Kidney (tissue), 22 donors: ENCODE measurements at regions of chr4 and their contacts with region 1.

Region 1: DNA sequence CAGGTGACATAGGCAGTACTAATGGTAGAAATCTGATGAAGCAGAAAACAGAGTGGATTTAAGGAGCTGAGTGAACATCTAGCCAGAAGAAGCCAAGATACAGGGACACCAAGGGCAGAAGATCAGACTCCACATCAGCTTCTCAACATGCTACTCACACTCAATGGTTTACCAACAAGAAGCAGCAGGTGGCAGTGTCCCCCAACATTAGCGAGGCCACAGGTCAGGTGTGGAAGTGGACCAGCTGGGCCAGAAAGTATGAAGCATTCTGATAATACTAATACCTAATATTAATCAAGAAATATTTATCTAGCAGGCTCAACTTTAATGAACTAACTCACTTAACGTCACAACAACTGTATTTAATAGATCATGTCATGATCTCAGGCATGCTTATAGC is 73.4 kb upstream of the TTC29 start:
- DNase-seq: peak in 4 of 5 donors; percentile 39 to 65 (median 52)
- H3K4me3 ChIP-seq: no peak overlapping the region
- H3K27ac ChIP-seq: no peak overlapping the region
- H3K4me1 ChIP-seq: no peaks in the 10 kb centered on the region
- H3K27me3 ChIP-seq: no peaks in the 10 kb centered on the region
- CTCF ChIP-seq: peak; percentile 53

Region 2: DNA sequence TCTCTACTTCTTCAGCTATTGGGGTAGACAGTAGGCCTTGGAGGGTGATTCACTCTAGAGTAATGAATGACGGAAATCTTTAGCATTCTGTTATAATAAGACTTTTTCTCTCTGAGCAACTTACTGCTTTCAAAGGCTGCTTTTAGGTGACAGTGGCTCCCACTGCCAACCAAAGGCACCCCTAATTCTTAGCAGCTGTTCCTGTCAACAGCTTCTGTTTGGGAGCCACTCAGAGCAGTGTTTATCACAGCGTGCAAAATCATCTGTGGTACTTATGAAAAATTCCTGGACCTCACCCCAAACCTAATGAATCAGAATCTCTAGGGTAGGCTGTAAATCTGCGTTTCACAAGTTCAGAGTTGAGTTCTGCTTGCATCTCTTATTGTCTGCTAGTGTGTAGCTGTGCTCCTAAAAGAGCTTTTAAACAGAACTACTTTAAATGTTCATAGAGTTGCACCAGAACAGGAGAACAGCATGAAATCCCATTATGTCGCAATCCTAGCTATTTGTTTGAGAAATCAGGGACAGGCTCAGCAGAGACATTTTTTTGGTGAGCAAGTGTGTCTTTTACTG is 433.2 kb before region 1 on chr4:
- intact Hi-C with region 1: no loop called
- DNase-seq: no peak
- H3K4me3 ChIP-seq: no peak overlapping the region
- H3K27ac ChIP-seq: no peak overlapping the region
- H3K4me1 ChIP-seq: no peaks in the 10 kb centered on the region
- H3K27me3 ChIP-seq: no peaks in the 10 kb centered on the region
- CTCF ChIP-seq: no peak

Region 3: GRCh38 chr4:146742416-146742815 is 276.6 kb before region 1 on chr4:
- intact Hi-C with region 1: no loop called
- DNase-seq: peak in 2 of 5 donors; percentile 2 to 15
- H3K4me3 ChIP-seq: no peak overlapping the region
- H3K27ac ChIP-seq: no peak overlapping the region
- H3K4me1 ChIP-seq: no peaks in the 10 kb centered on the region
- H3K27me3 ChIP-seq: no peaks in the 10 kb centered on the region
- CTCF ChIP-seq: no peak

Region 4: GRCh38 chr4:147096667-147097604 is 77.9 kb after region 1 on chr4:
- intact Hi-C with region 1: loop called (anchors 10 kb)
- DNase-seq: peak in 2 of 5 donors; percentile 70 to 72
- H3K4me3 ChIP-seq: no peak overlapping the region
- H3K27ac ChIP-seq: no peak overlapping the region
- H3K4me1 ChIP-seq: no peaks in the 10 kb centered on the region
- H3K27me3 ChIP-seq: no peaks in the 10 kb centered on the region
- CTCF ChIP-seq: peak; percentile 75